ENCODE measurements at regions of chr19 and their contacts with region 1.

Region 1: GRCh38 chr19:6362027-6362350 is 658 bp downstream of the CLPP start:
- DNase-seq: no peak
- ATAC-seq: no peak
- H3K4me3 ChIP-seq: peak overlapping the region; percentile 76
- H3K4me3 Mint-ChIP-seq: peak overlapping the region; percentile 83 to 100 (median 97)
- H3K27ac ChIP-seq: peak overlapping the region; percentile 82
- H3K27ac Mint-ChIP-seq: peak overlapping the region; percentile 87 to 98 (median 96)
- H3K4me1 ChIP-seq: peaks cover 10 to 13% of the 10 kb centered on the region in 2 donors
- H3K4me1 Mint-ChIP-seq: peaks cover 10 to 37% (median 22%) of the 10 kb centered on the region in 7 donors
- H3K27me3 ChIP-seq: no peaks in the 10 kb centered on the region
- H3K27me3 Mint-ChIP-seq: no peaks in the 10 kb centered on the region

Region 2: GRCh38 chr19:5827891-5828660 is 533.9 kb before region 1 on chr19:
- CTCF ChIA-PET with region 1: no interaction called
- POLR2A ChIA-PET with region 1: no interaction called
- intact Hi-C with region 1: loop called in 1 of 2 experiments (anchors 5 kb)
- DNase-seq: peak; percentile 91 to 98 (median 94)
- ATAC-seq: peak; percentile 90
- H3K4me3 ChIP-seq: peak overlapping the region; percentile 76
- H3K4me3 Mint-ChIP-seq: peak overlapping the region; percentile 91 to 100 (median 97)
- H3K27ac ChIP-seq: peak overlapping the region; percentile 80
- H3K27ac Mint-ChIP-seq: peak overlapping the region; percentile 94 to 100 (median 97)
- H3K4me1 ChIP-seq: peaks cover 10 to 17% of the 10 kb centered on the region in 2 donors
- H3K4me1 Mint-ChIP-seq: peaks cover 5 to 19% (median 10%) of the 10 kb centered on the region in 7 donors
- H3K27me3 ChIP-seq: no peaks in the 10 kb centered on the region
- H3K27me3 Mint-ChIP-seq: peaks cover 0 to 6% (median 0%) of the 10 kb centered on the region in 5 donors

Region 3: DNA sequence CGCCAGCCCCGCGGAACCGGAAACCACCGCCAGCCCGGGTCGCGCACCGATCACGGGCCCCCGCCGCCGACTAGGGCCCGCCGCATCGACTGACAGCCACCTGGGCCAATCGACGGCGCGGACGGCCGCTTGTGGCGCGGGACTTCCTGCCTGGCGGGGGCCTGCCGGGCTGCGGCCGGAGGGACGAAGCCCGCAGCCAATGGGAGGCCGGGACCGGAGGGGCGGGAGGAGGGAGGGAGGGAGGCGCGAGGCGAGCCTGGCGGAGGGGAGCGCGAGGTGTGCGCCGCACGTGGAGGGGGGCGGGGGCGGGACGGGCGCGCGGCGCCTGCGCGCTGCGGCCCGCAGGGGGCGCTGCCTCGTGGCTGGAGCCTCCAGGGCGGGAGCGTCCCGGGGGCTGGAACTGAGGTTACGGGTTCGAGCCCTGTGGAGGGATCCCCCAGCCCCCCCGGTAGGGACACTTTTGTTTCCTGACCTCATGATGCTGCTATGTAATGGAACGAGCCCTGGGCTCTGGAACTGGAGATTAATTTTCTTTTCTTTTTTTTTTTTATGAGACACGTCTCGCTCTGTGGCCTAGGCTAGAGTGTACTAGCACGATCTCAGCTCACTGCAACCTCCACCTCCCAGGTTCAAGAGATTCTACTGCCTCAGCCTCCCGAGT is 81.9 kb before region 1 on chr19 and contains the start of gene MLLT1:
- CTCF ChIA-PET with region 1: no interaction called
- POLR2A ChIA-PET with region 1: no interaction called
- intact Hi-C with region 1: loop called (anchors 1 to 2 kb)
- DNase-seq: peak; percentile 88 to 98 (median 90)
- ATAC-seq: peak; percentile 96
- H3K4me3 ChIP-seq: peak within 1 kb of the TSS; percentile 54
- H3K4me3 Mint-ChIP-seq: peak within 1 kb of the TSS; percentile 85 to 97 (median 92)
- H3K27ac ChIP-seq: peak within 1 kb of the TSS; percentile 78
- H3K27ac Mint-ChIP-seq: peak within 1 kb of the TSS; percentile 87 to 95 (median 93)
- H3K4me1 ChIP-seq: peaks cover 3 to 20% of the 10 kb centered on the region in 2 donors
- H3K4me1 Mint-ChIP-seq: peaks cover 30 to 42% (median 39%) of the 10 kb centered on the region in 7 donors
- H3K27me3 ChIP-seq: no peaks in the 10 kb centered on the region
- H3K27me3 Mint-ChIP-seq: peaks cover 0 to 6% (median 0%) of the 10 kb centered on the region in 5 donors
- total RNA-seq, gene MLLT1: 33.3 to 47.5 (median 39.0) TPM

Region 4: GRCh38 chr19:6424939-6425731 is 63.1 kb after region 1 on chr19:
- CTCF ChIA-PET with region 1: no interaction called
- POLR2A ChIA-PET with region 1: interaction called, 3 read pairs
- intact Hi-C with region 1: loop called (anchors 1 kb)
- DNase-seq: peak; percentile 66 to 100 (median 99)
- ATAC-seq: peak; percentile 89
- H3K4me3 ChIP-seq: peak overlapping the region; percentile 39
- H3K4me3 Mint-ChIP-seq: peak overlapping the region; percentile 69 to 87 (median 78)
- H3K27ac ChIP-seq: peak overlapping the region; percentile 77
- H3K27ac Mint-ChIP-seq: peak overlapping the region; percentile 78 to 97 (median 94)
- H3K4me1 ChIP-seq: peaks cover 15 to 32% of the 10 kb centered on the region in 2 donors
- H3K4me1 Mint-ChIP-seq: peaks cover 18 to 48% (median 41%) of the 10 kb centered on the region in 7 donors
- H3K27me3 ChIP-seq: no peaks in the 10 kb centered on the region
- H3K27me3 Mint-ChIP-seq: no peaks in the 10 kb centered on the region

Region 5: DNA sequence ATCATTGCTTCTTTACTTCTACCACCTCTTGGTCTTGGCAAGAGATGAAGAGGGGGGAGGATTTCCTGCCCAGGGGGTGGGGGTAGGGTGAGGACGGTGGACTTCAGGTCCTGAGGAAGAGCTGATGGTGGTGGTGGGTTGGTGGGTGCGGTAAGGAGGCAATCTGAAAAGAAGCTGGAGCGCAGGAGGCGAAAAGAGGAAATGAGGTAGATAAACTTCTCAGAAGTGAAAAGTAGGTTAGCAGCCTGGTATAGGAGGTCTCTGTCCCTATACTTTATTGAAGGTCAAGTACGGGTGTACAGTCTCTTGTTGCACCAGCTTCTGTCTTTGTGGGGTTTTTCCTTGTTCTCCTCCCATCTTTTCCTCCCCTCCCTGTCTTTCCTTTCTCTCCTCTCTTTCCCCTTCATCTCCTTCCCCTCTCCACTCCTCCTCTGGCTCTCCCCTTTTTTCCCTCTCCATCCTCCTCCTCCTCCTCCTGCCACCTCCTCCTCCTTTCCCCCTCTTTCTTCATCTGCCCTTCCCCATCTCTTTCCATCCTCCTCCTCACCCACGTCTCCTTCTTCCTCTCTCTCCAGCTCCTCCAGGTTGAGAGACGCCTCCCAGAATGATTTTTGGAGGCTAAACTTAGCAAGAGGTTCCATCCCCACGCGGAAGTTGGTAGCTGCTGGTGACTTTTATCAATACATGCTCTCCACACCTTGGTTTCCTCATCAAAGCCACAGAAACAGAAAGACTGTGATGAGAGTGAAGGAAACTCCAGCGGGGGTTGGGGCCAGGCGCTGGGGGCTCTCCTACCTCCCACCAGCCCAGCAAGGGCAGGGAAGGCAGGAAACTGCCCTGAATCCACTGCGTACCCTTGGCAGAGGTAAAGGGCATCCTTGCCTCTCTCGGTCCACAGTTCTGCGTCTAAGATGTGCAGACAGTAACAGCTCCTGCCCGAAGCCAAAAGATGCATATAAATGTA is 292.6 kb after region 1 on chr19:
- CTCF ChIA-PET with region 1: no interaction called
- POLR2A ChIA-PET with region 1: no interaction called
- intact Hi-C with region 1: no loop called
- DNase-seq: peak in 3 of 9 donors; percentile 14 to 75 (median 33)
- ATAC-seq: peak; percentile 76
- H3K4me3 ChIP-seq: peak overlapping the region; percentile 51
- H3K4me3 Mint-ChIP-seq: peak overlapping the region; percentile 59 to 96 (median 78)
- H3K27ac ChIP-seq: peak overlapping the region; percentile 62
- H3K27ac Mint-ChIP-seq: peak overlapping the region; percentile 62 to 99 (median 82)
- H3K4me1 ChIP-seq: peaks cover 17 to 21% of the 10 kb centered on the region in 2 donors
- H3K4me1 Mint-ChIP-seq: peaks cover 20 to 63% (median 25%) of the 10 kb centered on the region in 7 donors
- H3K27me3 ChIP-seq: no peaks in the 10 kb centered on the region
- H3K27me3 Mint-ChIP-seq: peaks cover 0 to 6% (median 0%) of the 10 kb centered on the region in 5 donors

Region 6: GRCh38 chr19:6801485-6802086 is 439.6 kb after region 1 on chr19:
- CTCF ChIA-PET with region 1: no interaction called
- POLR2A ChIA-PET with region 1: no interaction called
- intact Hi-C with region 1: no loop called
- DNase-seq: peak; percentile 58 to 90 (median 85)
- ATAC-seq: peak; percentile 78
- H3K4me3 ChIP-seq: peak overlapping the region; percentile 67
- H3K4me3 Mint-ChIP-seq: peak overlapping the region; percentile 87 to 99 (median 94)
- H3K27ac ChIP-seq: peak overlapping the region; percentile 85
- H3K27ac Mint-ChIP-seq: peak overlapping the region; percentile 93 to 99 (median 97)
- H3K4me1 ChIP-seq: peaks cover 28 to 35% of the 10 kb centered on the region in 2 donors
- H3K4me1 Mint-ChIP-seq: peaks cover 46 to 85% (median 68%) of the 10 kb centered on the region in 7 donors
- H3K27me3 ChIP-seq: no peaks in the 10 kb centered on the region
- H3K27me3 Mint-ChIP-seq: no peaks in the 10 kb centered on the region

Region 7: DNA sequence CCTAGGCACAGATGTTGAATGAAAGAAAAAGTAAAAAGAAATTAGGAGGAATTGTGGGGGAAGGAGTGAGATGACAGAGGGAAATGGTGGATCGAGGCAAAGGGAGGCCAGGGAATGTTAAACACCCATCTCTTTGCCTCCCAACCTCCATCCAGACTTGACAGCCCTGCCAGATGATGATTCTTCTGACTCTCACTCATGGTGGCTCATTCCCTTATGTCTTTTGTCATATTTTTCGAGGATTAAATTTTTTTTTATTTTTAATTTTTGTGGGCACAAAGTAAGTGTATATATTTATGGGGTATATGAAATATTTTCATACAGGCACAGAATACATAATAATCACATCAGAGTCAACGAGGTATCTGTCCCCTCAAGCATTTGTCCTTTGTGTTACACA is 568.2 kb after region 1 on chr19:
- CTCF ChIA-PET with region 1: no interaction called
- POLR2A ChIA-PET with region 1: no interaction called
- intact Hi-C with region 1: no loop called
- DNase-seq: no peak
- ATAC-seq: no peak
- H3K4me3 ChIP-seq: no peak overlapping the region
- H3K4me3 Mint-ChIP-seq: no peak overlapping the region
- H3K27ac ChIP-seq: no peak overlapping the region
- H3K27ac Mint-ChIP-seq: peak overlapping the region in 1 of 9 donors; percentile 71
- H3K4me1 ChIP-seq: peaks cover 3 to 11% of the 10 kb centered on the region in 2 donors
- H3K4me1 Mint-ChIP-seq: peaks cover 10 to 20% (median 18%) of the 10 kb centered on the region in 7 donors
- H3K27me3 ChIP-seq: no peaks in the 10 kb centered on the region
- H3K27me3 Mint-ChIP-seq: no peaks in the 10 kb centered on the region